ENCODE measurements at regions of chr11 and their contacts with region 1.

Region 1: GRCh38 chr11:103851166-103851651 is 185.2 kb upstream of the DDI1 start:
- DNase-seq: no peak
- H3K4me3 ChIP-seq: no peak overlapping the region
- H3K27ac ChIP-seq: no peak overlapping the region
- H3K4me1 ChIP-seq: no peaks in the 10 kb centered on the region
- H3K27me3 ChIP-seq: no peaks in the 10 kb centered on the region
- CTCF ChIP-seq: no peak
- EP300 ChIP-seq: no peak
- POLR2A ChIP-seq: no peak
- RAD21 ChIP-seq: no peak

Region 2: GRCh38 chr11:103862094-103862801 is 11.0 kb after region 1 on chr11:
- CTCF ChIA-PET with region 1: interaction called, 20 read pairs
- POLR2A ChIA-PET with region 1: no interaction called
- DNase-seq: no peak
- H3K4me3 ChIP-seq: no peak overlapping the region
- H3K27ac ChIP-seq: no peak overlapping the region
- H3K4me1 ChIP-seq: peaks cover 0 to 3% (median under 1%) of the 10 kb centered on the region in 4 experiments; a peak in 3 of 7 replicates
- H3K27me3 ChIP-seq: no peaks in the 10 kb centered on the region
- CTCF ChIP-seq: no peak
- EP300 ChIP-seq: no peak
- POLR2A ChIP-seq: no peak
- RAD21 ChIP-seq: peak; percentile 18 to 22; a peak in 2 of 4 replicates

Region 3: GRCh38 chr11:103987629-103988594 is 136.7 kb after region 1 on chr11:
- CTCF ChIA-PET with region 1: no interaction called
- POLR2A ChIA-PET with region 1: no interaction called
- DNase-seq: peak in 1 of 2 experiments; percentile 9
- H3K4me3 ChIP-seq: no peak overlapping the region
- H3K27ac ChIP-seq: no peak overlapping the region
- H3K4me1 ChIP-seq: peaks cover 0 to 3% (median 2%) of the 10 kb centered on the region in 4 experiments; a peak in 2 of 7 replicates
- H3K27me3 ChIP-seq: no peaks in the 10 kb centered on the region
- CTCF ChIP-seq: no peak
- EP300 ChIP-seq: no peak
- POLR2A ChIP-seq: no peak
- RAD21 ChIP-seq: no peak

Measured in H1 (cell line).